GM18951 (cell line): ENCODE measurements at regions of chr9 and their contacts with region 1.

Region 1: DNA sequence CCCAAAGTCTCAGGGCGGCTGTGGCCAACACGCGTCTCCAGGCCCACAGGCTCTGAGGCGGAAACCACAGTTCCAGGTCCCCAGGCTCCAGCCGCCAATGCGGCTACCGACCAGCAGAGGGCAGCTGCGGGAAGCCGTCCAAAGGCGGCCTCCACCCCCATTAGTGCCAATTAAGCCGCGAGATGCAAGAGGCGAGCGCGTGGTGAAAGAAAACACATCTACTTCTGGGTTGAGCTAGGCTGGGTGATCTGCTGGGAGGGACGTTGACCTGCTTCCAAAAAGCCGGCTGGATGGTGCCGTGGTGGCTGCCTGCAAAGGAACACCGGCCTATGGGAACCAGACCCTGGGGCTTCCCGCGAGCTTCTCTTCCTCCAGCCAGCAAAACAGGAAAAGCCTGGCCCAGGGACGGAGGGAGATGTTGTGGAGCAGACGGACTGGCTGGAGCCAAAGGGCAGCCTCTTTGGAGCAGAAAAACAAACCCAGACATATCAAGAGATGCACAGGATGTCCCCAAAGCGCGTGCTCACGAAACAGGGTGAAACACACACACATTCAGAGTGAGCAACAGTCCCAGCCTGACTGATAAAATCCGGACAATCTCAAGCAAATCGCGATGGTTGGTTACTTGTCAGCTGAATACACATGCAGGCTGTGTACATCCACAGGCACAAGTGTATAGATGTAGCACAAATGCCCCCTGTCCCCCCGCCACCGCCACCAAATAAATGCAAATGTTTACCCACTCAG is 187.1 kb upstream of the BRINP1 start:
- POLR2A ChIP-seq: no peak

Region 2: GRCh38 chr9:119318371-119318770 is 237.9 kb before region 1 on chr9:
- in situ Hi-C with region 1: no loop called
- POLR2A ChIP-seq: no peak

Region 3: DNA sequence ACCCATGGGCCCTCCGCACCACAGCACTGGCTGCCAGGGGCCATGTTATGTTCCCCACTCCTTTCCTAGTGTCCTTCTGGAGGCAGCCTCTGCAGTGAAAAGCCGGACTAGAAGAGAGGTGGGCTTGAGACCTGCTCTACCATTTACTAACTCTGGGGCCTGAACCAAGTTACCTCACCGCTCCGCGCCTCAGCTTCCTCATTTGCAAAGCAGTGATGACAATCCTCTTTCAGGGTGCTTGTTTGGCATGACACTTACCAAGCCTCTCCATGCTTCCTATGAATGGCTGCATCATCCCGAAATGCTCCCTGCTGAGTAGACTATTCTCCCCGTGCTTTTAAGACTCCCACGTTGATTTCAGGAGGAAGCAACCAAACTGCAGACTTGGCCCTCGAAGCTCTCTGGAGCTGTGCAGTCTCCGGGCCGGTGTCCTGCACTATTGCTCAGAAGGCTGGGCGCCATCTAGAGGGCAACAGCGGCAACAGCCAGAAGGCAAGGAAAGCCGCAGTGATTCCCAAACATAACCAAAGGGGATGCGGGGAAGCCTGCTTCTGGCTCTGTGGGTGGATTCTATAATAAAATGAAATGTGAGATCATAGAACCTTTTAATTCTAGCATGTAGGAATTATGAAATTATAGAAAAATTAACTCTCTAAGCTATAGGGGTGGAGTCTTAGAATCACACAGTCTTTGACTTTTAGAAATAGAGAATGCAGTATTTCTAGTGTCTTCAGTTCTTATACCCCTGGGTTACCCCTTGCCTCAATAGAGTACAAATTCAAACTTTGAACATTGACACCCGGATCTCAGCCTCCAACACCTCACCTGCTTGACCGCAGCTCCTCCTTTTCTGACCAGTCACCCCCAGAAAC is 412.8 kb after region 1 on chr9:
- in situ Hi-C with region 1: loop called (anchors 25 kb)
- POLR2A ChIP-seq: no peak

Region 4: GRCh38 chr9:120348951-120349429 is 792.7 kb after region 1 on chr9:
- in situ Hi-C with region 1: loop called (anchors 25 kb)
- POLR2A ChIP-seq: no peak